Vagina (tissue), 2 donors: ENCODE measurements at regions of chr14 and their contacts with region 1.

Region 1: DNA sequence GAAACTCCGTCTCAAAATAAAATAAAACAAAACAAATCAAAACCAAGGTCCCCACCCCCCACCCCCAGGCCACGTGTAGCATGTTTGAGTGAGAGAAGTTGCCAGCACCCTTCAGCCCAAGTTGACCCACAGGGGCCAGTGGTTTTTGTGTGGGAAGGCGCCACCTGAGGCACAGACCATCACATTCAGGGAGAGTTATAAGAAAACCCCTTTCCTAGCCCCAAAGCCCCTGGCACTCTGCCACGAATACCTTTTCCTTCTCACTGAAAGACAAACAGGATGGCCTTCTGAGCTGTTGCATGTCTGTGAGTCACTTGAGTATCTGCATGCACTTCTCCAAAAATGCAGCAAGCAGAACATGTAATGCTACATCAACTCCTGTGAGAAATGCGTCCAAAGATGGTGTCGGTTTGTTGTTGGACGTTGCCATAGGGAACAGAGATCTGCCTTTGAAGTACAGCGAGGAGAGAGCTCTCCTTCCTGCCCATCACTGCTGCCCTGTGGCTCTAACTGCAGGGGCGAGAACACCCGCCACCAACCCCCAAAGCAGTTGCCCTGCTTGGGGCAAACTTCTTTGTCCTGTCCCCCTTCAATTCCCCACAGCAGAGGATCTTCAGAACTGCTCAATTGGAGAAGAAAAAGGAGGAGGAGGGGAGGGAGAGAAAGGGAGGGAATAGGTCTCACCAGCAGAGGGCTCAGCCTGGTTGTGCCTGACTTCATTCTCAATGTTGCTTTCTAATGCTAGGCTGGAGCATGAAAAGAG is 2.7 kb upstream of the TRAF3 start:
- DNase-seq: no peak
- H3K4me3 ChIP-seq: no peak overlapping the region
- H3K27ac ChIP-seq: peak overlapping the region; percentile 81
- H3K4me1 ChIP-seq: peaks cover 13% of the 10 kb centered on the region
- H3K27me3 ChIP-seq: no peaks in the 10 kb centered on the region
- CTCF ChIP-seq: peak in 2 of 3 experiments; percentile 52 to 55
- POLR2A ChIP-seq: no peak

Region 2: DNA sequence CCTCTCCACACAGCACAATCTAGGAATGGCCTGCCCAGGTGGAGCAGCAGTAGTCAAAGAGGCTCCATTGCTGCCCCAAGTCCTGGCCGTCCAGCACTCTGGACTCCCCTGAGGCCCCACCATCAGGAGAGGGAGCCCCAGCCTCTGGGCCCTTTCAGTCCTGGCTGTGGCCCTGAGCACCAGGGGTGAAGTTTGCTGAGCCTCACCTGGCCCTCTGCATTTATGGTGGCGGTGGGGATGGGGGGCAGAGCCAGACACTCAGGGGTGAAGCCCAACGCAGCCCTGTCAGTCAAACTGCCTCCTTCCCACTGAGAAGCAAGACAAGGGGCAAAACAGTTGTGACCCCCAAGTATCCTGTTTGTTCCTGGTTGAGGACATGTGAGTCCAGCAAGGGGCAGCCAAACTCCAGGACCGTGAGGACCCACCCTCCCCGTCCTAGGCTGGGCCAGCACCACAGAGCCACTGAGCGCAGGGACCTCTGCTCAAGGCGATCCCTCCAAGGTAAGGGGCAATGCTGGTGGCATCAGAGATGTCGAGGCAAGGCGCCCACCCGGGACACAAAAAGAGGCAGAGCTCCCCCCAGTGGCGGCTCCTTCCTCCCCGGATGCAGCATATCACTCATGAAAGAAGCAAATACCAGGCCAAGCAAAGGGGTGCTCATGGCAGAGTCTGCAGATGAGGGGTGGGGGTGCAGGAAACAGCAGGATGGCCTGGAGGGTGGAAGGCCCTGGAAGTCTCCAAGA is 143.1 kb after region 1 on chr14:
- intact Hi-C with region 1: loop called (anchors 10 kb)
- DNase-seq: no peak
- H3K4me3 ChIP-seq: no peak overlapping the region
- H3K27ac ChIP-seq: no peak overlapping the region
- H3K4me1 ChIP-seq: peaks cover 1% of the 10 kb centered on the region
- H3K27me3 ChIP-seq: no peaks in the 10 kb centered on the region
- CTCF ChIP-seq: peak in 2 of 3 experiments; percentile 27 to 32
- POLR2A ChIP-seq: no peak

Region 3: GRCh38 chr14:103052407-103052806 is 277.8 kb after region 1 on chr14:
- intact Hi-C with region 1: loop called (anchors 5 kb)
- DNase-seq: no peak
- H3K4me3 ChIP-seq: no peak overlapping the region
- H3K27ac ChIP-seq: no peak overlapping the region
- H3K4me1 ChIP-seq: peaks cover 37% of the 10 kb centered on the region
- H3K27me3 ChIP-seq: no peaks in the 10 kb centered on the region
- CTCF ChIP-seq: no peak
- POLR2A ChIP-seq: no peak